ENCODE measurements at regions of chr14 and their contacts with region 1.

Region 1: DNA sequence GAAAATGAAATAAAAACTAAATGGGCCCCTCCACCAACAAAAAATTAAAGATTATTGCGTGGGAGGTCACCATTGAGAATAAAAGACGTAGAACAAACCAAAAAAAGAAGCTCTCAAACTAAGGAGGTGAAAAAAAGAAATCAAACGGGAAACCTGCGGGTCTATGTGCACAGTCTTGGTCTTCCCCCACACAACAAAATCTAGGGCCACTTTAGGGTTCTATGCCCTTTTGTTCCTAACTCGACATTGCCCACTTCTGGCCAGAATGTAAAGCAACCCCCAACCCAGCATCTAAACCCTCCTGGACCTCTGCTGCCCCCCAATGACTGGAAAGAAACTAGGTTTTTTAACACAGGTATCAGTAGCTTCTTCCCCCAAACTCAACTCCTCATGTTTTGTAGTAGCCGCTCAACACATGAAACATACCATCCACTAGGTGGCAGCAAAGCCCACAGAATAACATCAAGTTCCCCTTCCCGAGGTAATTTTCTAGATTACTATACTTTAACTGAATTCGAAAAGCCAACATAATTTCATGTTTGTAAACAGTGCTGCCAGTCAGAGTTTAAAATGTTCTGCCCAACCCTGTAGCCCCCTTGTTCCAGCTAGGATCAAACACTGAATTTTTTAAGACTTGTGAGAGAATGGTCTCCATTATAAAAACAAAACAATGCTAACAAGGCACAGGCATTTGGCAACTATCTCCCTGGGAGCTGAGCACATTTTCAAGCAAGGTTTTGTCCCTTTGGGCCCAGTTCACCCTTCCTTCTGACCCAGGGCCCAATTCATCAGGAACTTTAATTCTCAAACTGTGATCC is 18.7 kb downstream of the DAD1 start:
- DNase-seq: peak; percentile 78 to 89
- ATAC-seq: peak; percentile 82 to 87
- H3K4me3 ChIP-seq: no peak overlapping the region
- H3K27ac ChIP-seq: peak overlapping the region; percentile 51 to 80; a peak in 5 of 6 replicates
- H3K4me1 ChIP-seq: peaks cover 37% of the 10 kb centered on the region
- CTCF ChIP-seq: peak; percentile 95
- EP300 ChIP-seq: no peak
- POLR2A ChIP-seq: no peak
- RAD21 ChIP-seq: peak; percentile 92 to 95

Region 2: DNA sequence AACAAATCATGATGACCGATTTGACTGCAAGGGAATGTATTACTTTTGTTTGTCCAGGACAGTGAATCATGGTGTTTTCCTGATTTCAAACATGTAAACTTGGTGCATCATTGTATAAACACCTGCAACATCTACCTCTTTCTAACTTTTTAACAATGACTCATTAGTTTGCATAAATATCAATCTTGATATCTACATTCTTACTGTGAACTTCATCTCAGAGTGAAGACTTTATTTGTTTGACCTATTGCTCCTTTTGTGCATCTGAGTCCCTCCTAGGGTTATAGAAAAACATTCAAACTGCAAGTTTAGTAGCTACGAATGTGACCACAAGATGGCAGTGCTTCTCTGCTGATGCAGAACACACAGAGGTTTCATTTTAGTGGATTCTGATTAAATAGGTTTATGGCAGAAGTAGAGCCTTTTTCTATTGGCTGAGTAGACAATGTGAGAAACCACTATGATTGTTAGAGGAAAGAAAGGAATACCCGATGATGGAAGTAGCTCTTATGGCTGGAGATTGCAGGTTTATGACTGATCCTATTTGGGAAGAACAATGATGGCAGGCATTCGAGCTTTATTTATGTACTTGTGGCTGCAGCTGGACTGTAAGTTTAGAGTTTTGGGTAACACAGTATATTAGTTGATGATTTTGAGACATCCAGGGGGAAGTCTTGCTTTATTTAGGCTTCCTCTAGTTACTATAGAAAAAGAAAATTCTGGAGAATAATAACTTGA is 652.5 kb before region 1 on chr14:
- CTCF ChIA-PET with region 1: no interaction called
- POLR2A ChIA-PET with region 1: no interaction called
- DNase-seq: peak; percentile 43 to 92
- ATAC-seq: peak; percentile 85 to 86
- H3K4me3 ChIP-seq: no peak overlapping the region
- H3K27ac ChIP-seq: no peak overlapping the region
- H3K4me1 ChIP-seq: peaks cover 40% of the 10 kb centered on the region
- CTCF ChIP-seq: peak; percentile 86
- EP300 ChIP-seq: peak; percentile 54 to 87; a peak in 3 of 5 replicates
- POLR2A ChIP-seq: no peak
- RAD21 ChIP-seq: peak; percentile 77 to 88

Region 3: DNA sequence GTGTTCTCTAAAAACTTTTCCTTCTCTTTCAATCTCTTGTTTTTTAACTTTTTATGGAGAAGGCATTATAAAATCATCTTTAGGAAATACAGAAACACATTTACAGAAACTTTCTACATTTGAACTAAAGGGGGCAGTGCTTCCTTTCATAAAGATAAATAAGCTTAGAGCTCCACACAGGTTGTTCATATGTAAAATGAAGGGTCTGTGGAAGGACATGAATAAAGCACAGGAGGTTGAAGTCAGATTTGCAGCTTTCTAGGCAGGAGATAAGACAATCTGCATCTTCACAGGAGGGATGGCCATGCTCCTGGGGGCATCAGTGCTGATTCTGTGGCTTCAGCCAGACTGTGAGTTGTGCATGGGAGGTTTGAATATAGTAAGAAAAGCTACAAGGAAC is 407.3 kb before region 1 on chr14:
- CTCF ChIA-PET with region 1: no interaction called
- POLR2A ChIA-PET with region 1: no interaction called
- DNase-seq: no peak
- ATAC-seq: no peak
- H3K4me3 ChIP-seq: no peak overlapping the region
- H3K27ac ChIP-seq: no peak overlapping the region
- H3K4me1 ChIP-seq: no peaks in the 10 kb centered on the region
- CTCF ChIP-seq: no peak
- EP300 ChIP-seq: no peak
- POLR2A ChIP-seq: no peak
- RAD21 ChIP-seq: 0 out of 5 replicates have a peak, but pooled peaks of 1 of the 2 experiments have one; percentile 4

Region 4: GRCh38 chr14:22386924-22387775 is 183.2 kb before region 1 on chr14:
- CTCF ChIA-PET with region 1: interaction called, 13 read pairs
- POLR2A ChIA-PET with region 1: no interaction called
- DNase-seq: peak; percentile 72 to 82
- ATAC-seq: peak; percentile 55 to 78; a peak in 4 of 6 replicates
- H3K4me3 ChIP-seq: no peak overlapping the region
- H3K27ac ChIP-seq: no peak overlapping the region
- H3K4me1 ChIP-seq: peaks cover 32% of the 10 kb centered on the region
- CTCF ChIP-seq: peak; percentile 90
- EP300 ChIP-seq: no peak
- POLR2A ChIP-seq: no peak
- RAD21 ChIP-seq: peak; percentile 92 to 93

Region 5: GRCh38 chr14:22598099-22598899 is 28.0 kb after region 1 on chr14 and contains the start of gene ABHD4:
- CTCF ChIA-PET with region 1: interaction called, 102 read pairs
- POLR2A ChIA-PET with region 1: no interaction called
- DNase-seq: peak; percentile 65 to 78
- ATAC-seq: peak; percentile 92
- H3K4me3 ChIP-seq: peak within 1 kb of the TSS; percentile 84
- H3K27ac ChIP-seq: peak within 1 kb of the TSS; percentile 86 to 91
- H3K4me1 ChIP-seq: peaks cover 48% of the 10 kb centered on the region
- CTCF ChIP-seq: no peak
- EP300 ChIP-seq: no peak
- POLR2A ChIP-seq: peak; percentile 43
- RAD21 ChIP-seq: no peak
- polyA plus RNA-seq, gene ABHD4: 58.3 and 75.0 TPM in 2 replicates

Region 6: DNA sequence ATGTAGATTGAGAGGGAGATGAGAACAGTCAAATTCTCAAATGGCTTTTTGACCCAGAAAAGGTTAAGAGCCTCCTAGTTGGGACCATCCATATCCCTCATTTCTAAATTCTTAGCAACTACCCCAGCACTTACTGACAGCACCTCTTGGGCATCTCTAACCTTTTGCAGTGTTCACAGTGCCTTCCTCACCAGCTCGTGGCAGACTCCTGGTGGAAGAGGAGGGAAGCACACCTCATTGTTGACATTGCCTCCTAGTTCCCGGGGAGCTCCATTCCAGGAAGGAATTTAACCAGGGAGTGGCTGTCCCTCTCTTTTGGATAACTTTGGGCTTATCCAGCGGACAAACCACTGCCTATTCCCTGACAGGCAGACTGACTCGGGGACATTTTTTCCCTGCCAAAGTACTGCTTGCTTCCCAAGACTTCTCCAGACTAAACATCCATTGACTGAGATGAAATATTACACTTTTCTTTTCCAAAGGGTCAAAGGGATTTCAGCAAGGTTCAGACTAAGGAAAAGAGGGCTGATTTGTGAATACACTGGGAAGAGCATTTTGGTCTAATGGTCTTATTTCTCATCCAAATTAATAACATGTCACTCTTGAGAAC is 82.8 kb after region 1 on chr14:
- CTCF ChIA-PET with region 1: interaction called, 376 read pairs
- POLR2A ChIA-PET with region 1: interaction called, 7 read pairs
- DNase-seq: peak; percentile 78 to 83
- ATAC-seq: peak; percentile 92 to 95
- H3K4me3 ChIP-seq: no peak overlapping the region
- H3K27ac ChIP-seq: peak overlapping the region; percentile 46 to 59; a peak in 5 of 6 replicates
- H3K4me1 ChIP-seq: peaks cover 38% of the 10 kb centered on the region; the same call in 2 of the 3 replicates
- CTCF ChIP-seq: peak; percentile 82
- EP300 ChIP-seq: no peak
- POLR2A ChIP-seq: no peak
- RAD21 ChIP-seq: peak; percentile 88 to 90

Region 7: GRCh38 chr14:22781586-22781991 is 211.2 kb after region 1 on chr14:
- CTCF ChIA-PET with region 1: interaction called, 14 read pairs
- POLR2A ChIA-PET with region 1: no interaction called
- DNase-seq: no peak
- ATAC-seq: no peak
- H3K4me3 ChIP-seq: no peak overlapping the region
- H3K27ac ChIP-seq: no peak overlapping the region
- H3K4me1 ChIP-seq: peaks cover 10% of the 10 kb centered on the region; the same call in 2 of the 3 replicates
- CTCF ChIP-seq: no peak
- EP300 ChIP-seq: no peak
- POLR2A ChIP-seq: no peak
- RAD21 ChIP-seq: no peak

Region 8: DNA sequence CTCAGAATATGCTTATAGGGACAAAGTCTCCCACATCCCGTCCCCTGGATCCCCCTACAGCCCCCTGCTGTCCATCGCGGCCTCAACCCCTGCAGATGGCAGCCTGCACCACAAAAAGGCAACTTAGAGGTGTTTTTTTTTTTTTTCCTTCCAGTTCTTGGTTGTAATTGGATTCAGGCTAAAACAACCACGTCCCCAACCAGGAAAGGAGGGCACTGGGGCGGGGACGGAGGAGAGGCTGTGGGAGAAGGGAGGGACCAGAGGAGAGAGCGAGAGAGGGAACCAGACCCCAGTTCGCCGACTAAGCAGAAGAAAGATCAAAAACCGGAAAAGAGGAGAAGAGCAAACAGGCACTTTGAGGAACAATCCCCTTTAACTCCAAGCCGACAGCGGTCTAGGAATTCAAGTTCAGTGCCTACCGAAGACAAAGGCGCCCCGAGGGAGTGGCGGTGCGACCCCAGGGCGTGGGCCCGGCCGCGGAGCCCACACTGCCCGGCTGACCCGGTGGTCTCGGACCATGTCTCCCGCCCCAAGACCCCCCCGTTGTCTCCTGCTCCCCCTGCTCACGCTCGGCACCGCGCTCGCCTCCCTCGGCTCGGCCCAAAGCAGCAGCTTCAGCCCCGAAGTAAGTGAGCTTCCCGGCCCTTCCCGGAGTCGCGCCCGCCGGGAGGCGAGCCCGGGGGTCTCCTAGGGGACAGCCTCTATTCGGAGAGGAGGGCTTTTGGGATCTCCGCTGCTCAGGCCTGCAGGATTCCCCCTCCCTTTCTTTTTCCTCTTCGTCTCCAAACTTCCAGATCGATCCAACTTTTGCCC is 266.2 kb after region 1 on chr14 and contains the start of gene MMP14:
- CTCF ChIA-PET with region 1: interaction called, 20 read pairs
- POLR2A ChIA-PET with region 1: no interaction called
- DNase-seq: no peak
- ATAC-seq: no peak
- H3K4me3 ChIP-seq: 0 out of 3 replicates have a peak within 1 kb of the TSS, but pooled peaks have one; percentile 18
- H3K27ac ChIP-seq: peak within 1 kb of the TSS in 1 of 2 experiments; percentile 38; a peak in 1 of 6 replicates
- H3K4me1 ChIP-seq: no peaks in the 10 kb centered on the region
- CTCF ChIP-seq: no peak
- EP300 ChIP-seq: no peak
- POLR2A ChIP-seq: no peak
- RAD21 ChIP-seq: no peak
- polyA plus RNA-seq, gene MMP14: 1.9 and 2.5 TPM in 2 replicates

Measured in A549 (cell line).